ENCODE measurements at regions of chr4 and their contacts with region 1.

Region 1: DNA sequence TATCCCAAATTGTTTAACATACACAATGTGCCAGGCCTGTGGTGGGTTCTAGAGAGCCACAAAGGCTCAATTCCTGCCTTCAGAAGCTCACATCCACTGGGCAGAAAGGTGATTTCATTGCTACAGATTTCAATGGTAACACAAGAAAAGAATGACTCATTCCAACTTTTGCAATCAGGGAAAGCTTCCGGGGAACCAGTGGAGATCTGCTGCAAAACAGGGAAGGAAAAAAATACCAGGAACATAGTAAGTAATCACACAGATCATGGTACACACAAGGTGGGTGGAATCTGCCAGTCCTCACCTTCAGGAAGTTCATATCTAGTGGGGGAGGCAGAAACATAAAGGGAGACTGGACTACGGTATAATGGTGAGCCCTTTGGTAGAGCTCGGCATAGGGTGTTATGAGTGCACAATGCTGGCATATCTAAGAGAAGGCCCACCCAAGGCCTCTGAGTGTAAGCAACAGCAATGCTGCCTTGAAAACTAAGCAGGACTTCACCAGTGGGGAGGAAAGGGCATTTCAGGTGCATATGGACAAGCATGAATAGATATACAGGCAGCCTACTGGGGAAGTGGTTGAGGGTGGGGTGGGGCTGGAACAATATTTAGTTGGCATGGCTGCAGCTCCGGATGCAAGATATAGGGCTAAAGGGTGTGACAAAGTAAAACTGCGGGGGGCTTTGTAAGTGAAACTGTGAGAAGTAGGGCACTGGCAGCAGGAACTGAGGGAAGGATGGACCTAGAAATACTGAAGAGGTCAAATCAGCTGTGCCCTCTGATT is 24.2 kb downstream of the GPRIN3 start:
- DNase-seq: no peak
- ATAC-seq: no peak
- H3K4me3 ChIP-seq: no peak overlapping the region
- H3K27ac ChIP-seq: no peak overlapping the region
- H3K4me1 ChIP-seq: no peaks in the 10 kb centered on the region
- H3K27me3 ChIP-seq: no peaks in the 10 kb centered on the region
- CTCF ChIP-seq: no peak

Region 2: GRCh38 chr4:89379511-89380044 is 96.2 kb after region 1 on chr4:
- CTCF ChIA-PET with region 1: interaction called, 10 read pairs
- POLR2A ChIA-PET with region 1: no interaction called
- in situ Hi-C with region 1: no loop called
- intact Hi-C with region 1: no loop called
- DNase-seq: no peak
- ATAC-seq: no peak
- H3K4me3 ChIP-seq: no peak overlapping the region
- H3K27ac ChIP-seq: no peak overlapping the region
- H3K4me1 ChIP-seq: no peaks in the 10 kb centered on the region
- H3K27me3 ChIP-seq: no peaks in the 10 kb centered on the region
- CTCF ChIP-seq: no peak

Region 3: DNA sequence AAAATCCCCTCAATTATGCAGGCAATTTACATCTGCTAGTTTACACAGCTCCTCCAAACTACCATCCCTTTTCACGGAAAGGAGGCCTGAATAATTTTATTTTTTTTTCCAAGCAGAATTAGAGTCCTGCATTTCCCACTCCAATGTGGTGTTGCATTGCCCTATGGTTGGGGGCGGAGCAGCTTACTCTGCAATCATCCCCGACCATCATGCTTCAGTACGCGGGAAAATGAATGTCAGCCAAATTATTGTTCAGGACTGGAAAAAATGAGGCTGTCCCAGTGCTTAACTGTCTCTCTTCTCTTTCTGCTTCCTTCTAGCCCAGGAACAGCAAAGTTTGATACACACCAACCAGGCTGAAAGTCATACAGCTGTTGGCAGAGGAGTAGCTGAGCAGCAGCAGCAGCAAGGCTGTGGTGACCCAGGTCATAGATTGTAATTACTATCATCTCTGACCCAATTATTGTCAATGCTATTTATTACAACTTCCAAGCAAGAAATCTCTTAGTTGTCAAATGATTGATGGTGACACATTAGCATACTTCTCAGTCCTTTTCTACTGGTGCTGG is 639.5 kb after region 1 on chr4:
- CTCF ChIA-PET with region 1: no interaction called
- POLR2A ChIA-PET with region 1: no interaction called
- in situ Hi-C with region 1: no loop called
- intact Hi-C with region 1: no loop called
- DNase-seq: no peak
- ATAC-seq: no peak
- H3K4me3 ChIP-seq: no peak overlapping the region
- H3K27ac ChIP-seq: no peak overlapping the region
- H3K4me1 ChIP-seq: no peaks in the 10 kb centered on the region
- H3K27me3 ChIP-seq: no peaks in the 10 kb centered on the region
- CTCF ChIP-seq: no peak